CD4-positive, alpha-beta memory T cell (primary cell): ENCODE measurements at regions of chr2 and their contacts with region 1.

Region 1: GRCh38 chr2:190550137-190550536 is 15.6 kb upstream of the NEMP2 start:
- DNase-seq: no peak
- H3K4me3 ChIP-seq: no peak overlapping the region
- H3K4me3 Mint-ChIP-seq: no peak overlapping the region
- H3K27ac ChIP-seq: no peak overlapping the region
- H3K27ac Mint-ChIP-seq: no peak overlapping the region
- H3K4me1 ChIP-seq: no peaks in the 10 kb centered on the region
- H3K4me1 Mint-ChIP-seq: peaks cover 1 to 7% (median 6%) of the 10 kb centered on the region in 4 donors
- H3K27me3 ChIP-seq: no peaks in the 10 kb centered on the region
- H3K27me3 Mint-ChIP-seq: no peaks in the 10 kb centered on the region

Region 2: GRCh38 chr2:190382851-190383250 is 167.3 kb before region 1 on chr2:
- CTCF ChIA-PET with region 1: no interaction called
- POLR2A ChIA-PET with region 1: no interaction called
- intact Hi-C with region 1: loop called (anchors 1 kb)
- DNase-seq: peak; percentile 50 to 66 (median 61)
- H3K4me3 ChIP-seq: no peak overlapping the region
- H3K4me3 Mint-ChIP-seq: no peak overlapping the region
- H3K27ac ChIP-seq: no peak overlapping the region
- H3K27ac Mint-ChIP-seq: no peak overlapping the region
- H3K4me1 ChIP-seq: no peaks in the 10 kb centered on the region
- H3K4me1 Mint-ChIP-seq: peaks cover 0 to 3% (median 0%) of the 10 kb centered on the region in 4 donors
- H3K27me3 ChIP-seq: no peaks in the 10 kb centered on the region
- H3K27me3 Mint-ChIP-seq: peaks cover 0 to 1% of the 10 kb centered on the region in 2 donors